Activated CD8-positive, alpha-beta T cell treated with anti-CD3 and anti-CD28 coated beads for 36 hours (primary cell): ENCODE measurements at regions of chr20 and their contacts with region 1.

Region 1: DNA sequence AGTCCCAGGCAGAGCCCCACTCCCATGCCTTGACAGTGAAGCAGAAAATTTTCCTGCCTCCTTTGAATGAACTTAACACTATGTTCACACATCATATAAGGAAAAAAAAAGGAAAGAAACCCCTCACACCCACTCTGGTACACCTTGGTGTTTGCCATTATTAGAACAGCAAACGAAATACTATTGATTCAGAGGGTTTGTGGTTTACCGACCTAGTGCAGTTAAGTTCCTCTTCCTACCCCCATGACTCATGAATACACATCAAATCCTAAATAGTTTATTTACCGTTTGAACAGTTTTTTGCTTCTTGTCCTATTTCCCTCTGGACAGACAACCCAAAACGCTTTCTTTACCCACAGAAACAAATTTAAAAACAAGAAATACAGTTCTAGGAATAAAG is 237.7 kb downstream of the FOXA2 start:
- DNase-seq: no peak
- ATAC-seq: no peak
- H3K4me3 Mint-ChIP-seq: no peak overlapping the region
- H3K27ac Mint-ChIP-seq: no peak overlapping the region
- H3K4me1 Mint-ChIP-seq: no peaks in the 10 kb centered on the region
- H3K27me3 Mint-ChIP-seq: no peaks in the 10 kb centered on the region
- CTCF ChIP-seq: no peak

Region 2: DNA sequence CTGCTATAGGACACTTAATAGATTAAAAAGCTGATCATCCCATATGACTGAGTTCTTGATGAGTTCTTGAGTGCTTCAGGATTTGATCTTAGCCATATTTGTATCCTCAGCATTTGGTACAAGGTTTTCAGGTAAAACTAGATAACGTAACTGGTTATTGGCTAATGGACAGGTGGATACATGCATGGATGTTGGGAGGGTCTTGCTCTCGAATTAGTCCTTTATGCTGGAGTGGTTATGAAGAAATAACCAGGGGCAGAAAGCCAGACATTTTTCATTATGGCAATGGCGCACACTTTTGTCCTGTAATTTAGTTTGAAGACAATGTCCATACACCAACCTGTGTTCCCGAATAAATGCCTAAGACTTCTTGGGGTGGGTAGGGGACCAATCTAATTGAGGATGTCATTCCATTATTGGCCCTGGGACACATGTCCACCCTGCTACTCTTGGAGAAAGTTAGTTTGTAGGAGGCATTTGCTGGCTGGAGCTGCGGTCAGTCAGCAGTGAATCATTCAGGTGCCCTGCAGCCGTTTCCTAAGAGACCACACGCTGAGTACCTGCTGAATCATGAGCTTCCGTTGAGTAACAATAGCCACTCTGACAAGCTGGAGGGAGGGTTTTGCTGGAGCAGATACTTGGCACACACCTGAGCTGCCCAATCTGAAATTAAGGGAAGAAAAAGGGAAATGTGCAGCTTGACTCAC is 43.3 kb after region 1 on chr20:
- CTCF ChIA-PET with region 1: no interaction called
- POLR2A ChIA-PET with region 1: no interaction called
- intact Hi-C with region 1: loop called (anchors 10 kb)
- DNase-seq: no peak
- ATAC-seq: no peak
- H3K4me3 Mint-ChIP-seq: no peak overlapping the region
- H3K27ac Mint-ChIP-seq: no peak overlapping the region
- H3K4me1 Mint-ChIP-seq: no peaks in the 10 kb centered on the region
- H3K27me3 Mint-ChIP-seq: no peaks in the 10 kb centered on the region
- CTCF ChIP-seq: no peak